ENCODE measurements at regions of chr7 and their contacts with region 1.

Region 1: GRCh38 chr7:151759591-151760042 is 117.3 kb downstream of the PRKAG2 start:
- DNase-seq: peak; percentile 49 to 81
- H3K4me3 ChIP-seq: no peak overlapping the region
- H3K27ac ChIP-seq: no peak overlapping the region
- H3K4me1 ChIP-seq: peaks cover 2 to 10% (median 7%) of the 10 kb centered on the region in 4 experiments; a peak in 6 of 7 replicates
- H3K27me3 ChIP-seq: peaks cover 0 to 10% (median 5%) of the 10 kb centered on the region in 4 experiments; a peak in 4 of 7 replicates
- CTCF ChIP-seq: peak; percentile 82 to 92 (median 92)
- EP300 ChIP-seq: no peak
- POLR2A ChIP-seq: no peak
- RAD21 ChIP-seq: peak; percentile 95 to 96

Region 2: GRCh38 chr7:151626422-151627115 is 133.0 kb before region 1 on chr7:
- CTCF ChIA-PET with region 1: interaction called, 107 read pairs
- POLR2A ChIA-PET with region 1: no interaction called
- DNase-seq: peak in 1 of 2 experiments; percentile 48
- H3K4me3 ChIP-seq: no peak overlapping the region
- H3K27ac ChIP-seq: no peak overlapping the region
- H3K4me1 ChIP-seq: peaks cover 2 to 17% (median 11%) of the 10 kb centered on the region in 4 experiments
- H3K27me3 ChIP-seq: peaks cover 0 to 21% (median 13%) of the 10 kb centered on the region in 4 experiments; a peak in 3 of 7 replicates
- CTCF ChIP-seq: peak; percentile 76 to 89 (median 79)
- EP300 ChIP-seq: no peak
- POLR2A ChIP-seq: no peak
- RAD21 ChIP-seq: peak; percentile 80 to 87

Region 3: DNA sequence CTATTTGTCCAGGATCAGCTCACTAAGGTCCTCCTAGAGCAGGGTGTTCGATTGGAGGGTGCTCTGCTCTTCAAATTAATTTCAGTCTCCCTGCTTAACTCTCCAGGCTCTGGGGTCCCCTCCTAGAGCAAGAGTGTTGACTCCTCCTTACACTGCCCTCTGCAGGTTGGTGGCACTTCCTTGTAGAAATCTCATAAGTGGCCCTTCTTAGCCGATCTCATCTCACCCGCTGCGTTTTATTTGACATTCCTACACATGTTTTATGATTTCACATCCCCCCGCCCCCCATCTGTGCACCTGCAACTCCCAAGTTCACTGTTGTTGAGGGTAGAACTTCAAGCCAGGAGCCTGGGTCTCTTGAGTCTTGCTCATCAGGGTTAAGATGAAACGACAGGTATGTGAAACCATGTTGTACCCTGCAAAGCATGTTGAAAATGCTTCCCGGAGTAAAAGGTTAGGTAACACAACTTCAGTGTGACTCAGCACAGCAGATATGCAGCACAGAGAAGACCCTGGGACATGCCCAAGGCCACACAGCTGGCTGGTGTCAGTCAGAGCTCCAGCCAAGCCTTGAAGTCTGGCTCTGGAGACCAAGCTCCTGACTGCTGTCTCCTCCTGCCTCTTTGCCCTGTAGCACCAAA is 53.9 kb before region 1 on chr7:
- CTCF ChIA-PET with region 1: interaction called, 14 read pairs
- POLR2A ChIA-PET with region 1: no interaction called
- DNase-seq: peak in 1 of 2 experiments; percentile 63
- H3K4me3 ChIP-seq: no peak overlapping the region
- H3K27ac ChIP-seq: no peak overlapping the region
- H3K4me1 ChIP-seq: peaks cover 0 to 3% (median under 1%) of the 10 kb centered on the region in 4 experiments; a peak in 3 of 7 replicates
- H3K27me3 ChIP-seq: no peaks in the 10 kb centered on the region; a peak in 3 of 7 replicates
- CTCF ChIP-seq: peak; percentile 51 to 74 (median 67)
- EP300 ChIP-seq: no peak
- POLR2A ChIP-seq: no peak
- RAD21 ChIP-seq: peak; percentile 67 to 73

Region 4: DNA sequence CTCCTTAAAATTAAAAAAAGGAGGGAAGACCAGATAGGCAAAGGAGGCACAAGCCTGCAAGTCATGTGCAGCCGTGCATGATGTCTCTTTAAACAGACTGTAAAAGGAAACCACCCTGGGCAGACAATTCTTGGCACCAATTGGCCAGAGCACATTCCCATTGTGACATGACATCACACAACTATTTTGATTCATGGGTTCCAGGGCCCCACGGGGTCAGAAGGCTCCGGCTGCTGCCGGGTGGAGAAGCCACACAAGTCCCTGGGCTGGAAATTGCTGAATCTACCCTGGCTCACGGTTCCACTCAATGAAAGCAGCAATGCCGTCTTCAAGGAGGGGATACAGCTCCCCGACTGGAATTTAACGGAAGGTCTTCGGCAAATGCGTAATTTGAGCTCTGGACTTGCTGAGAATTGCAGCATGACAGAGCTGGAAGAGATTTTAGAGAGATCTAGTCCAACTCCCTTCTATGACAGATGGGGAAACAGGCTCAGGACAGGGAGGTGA is 23.2 kb before region 1 on chr7:
- CTCF ChIA-PET with region 1: interaction called, 29 read pairs
- POLR2A ChIA-PET with region 1: interaction called, 4 read pairs
- DNase-seq: peak; percentile 44 to 58
- H3K4me3 ChIP-seq: no peak overlapping the region
- H3K27ac ChIP-seq: no peak overlapping the region
- H3K4me1 ChIP-seq: peaks cover 10 to 25% (median 11%) of the 10 kb centered on the region in 4 experiments
- H3K27me3 ChIP-seq: no peaks in the 10 kb centered on the region; a peak in 1 of 7 replicates
- CTCF ChIP-seq: peak; percentile 30 to 62 (median 55)
- EP300 ChIP-seq: no peak
- POLR2A ChIP-seq: no peak
- RAD21 ChIP-seq: peak; percentile 40 to 59; a peak in 3 of 4 replicates

Region 5: GRCh38 chr7:151782598-151783448 is 23.2 kb after region 1 on chr7:
- CTCF ChIA-PET with region 1: interaction called, 46 read pairs
- POLR2A ChIA-PET with region 1: no interaction called
- DNase-seq: peak; percentile 58 to 92
- H3K4me3 ChIP-seq: peak overlapping the region in 2 of 4 experiments; percentile 7 to 48; a peak in 2 of 8 replicates
- H3K27ac ChIP-seq: no peak overlapping the region
- H3K4me1 ChIP-seq: peaks cover 0 to 4% (median 1%) of the 10 kb centered on the region in 4 experiments; a peak in 2 of 7 replicates
- H3K27me3 ChIP-seq: peaks cover 0 to 6% (median 3%) of the 10 kb centered on the region in 4 experiments; a peak in 4 of 7 replicates
- CTCF ChIP-seq: peak; percentile 84 to 99 (median 95)
- EP300 ChIP-seq: peak in 1 of 2 experiments; percentile 15; a peak in 1 of 3 replicates
- POLR2A ChIP-seq: no peak
- RAD21 ChIP-seq: peak; percentile 62 to 77

Region 6: DNA sequence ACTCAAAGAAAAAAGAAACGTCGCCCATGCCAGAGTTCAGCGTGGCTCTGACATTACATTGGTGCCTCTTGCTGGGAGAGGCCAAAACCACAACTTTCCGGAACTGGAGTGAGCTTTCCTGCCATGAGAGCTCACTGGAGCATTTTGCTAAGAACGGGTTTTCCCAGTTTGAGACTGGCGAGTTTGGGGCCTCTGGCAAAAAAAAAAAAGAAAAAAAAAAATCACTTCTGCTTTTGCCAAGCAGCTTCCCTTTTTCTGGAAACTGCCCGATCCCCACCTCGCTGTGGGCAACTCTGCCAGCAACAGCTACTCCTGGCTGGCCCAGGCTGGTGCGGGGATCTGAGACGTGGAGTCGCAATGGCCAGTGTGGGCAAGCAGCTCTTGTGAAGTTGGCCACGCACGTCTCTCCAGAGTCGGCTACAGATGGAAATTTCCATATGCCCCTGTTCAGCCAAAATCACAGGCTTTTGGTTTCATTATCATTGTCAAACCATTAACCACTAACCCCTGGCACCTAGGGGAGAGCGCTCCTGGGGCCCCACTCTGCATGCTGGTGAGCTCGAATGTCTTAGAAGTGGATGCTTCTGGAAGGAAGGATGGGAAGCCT is 91.6 kb after region 1 on chr7:
- CTCF ChIA-PET with region 1: no interaction called
- POLR2A ChIA-PET with region 1: no interaction called
- DNase-seq: no peak
- H3K4me3 ChIP-seq: no peak overlapping the region
- H3K27ac ChIP-seq: no peak overlapping the region
- H3K4me1 ChIP-seq: peaks cover 0 to 3% (median 0%) of the 10 kb centered on the region in 4 experiments; a peak in 1 of 7 replicates
- H3K27me3 ChIP-seq: no peaks in the 10 kb centered on the region
- CTCF ChIP-seq: no peak
- EP300 ChIP-seq: no peak
- POLR2A ChIP-seq: no peak
- RAD21 ChIP-seq: no peak

Region 7: DNA sequence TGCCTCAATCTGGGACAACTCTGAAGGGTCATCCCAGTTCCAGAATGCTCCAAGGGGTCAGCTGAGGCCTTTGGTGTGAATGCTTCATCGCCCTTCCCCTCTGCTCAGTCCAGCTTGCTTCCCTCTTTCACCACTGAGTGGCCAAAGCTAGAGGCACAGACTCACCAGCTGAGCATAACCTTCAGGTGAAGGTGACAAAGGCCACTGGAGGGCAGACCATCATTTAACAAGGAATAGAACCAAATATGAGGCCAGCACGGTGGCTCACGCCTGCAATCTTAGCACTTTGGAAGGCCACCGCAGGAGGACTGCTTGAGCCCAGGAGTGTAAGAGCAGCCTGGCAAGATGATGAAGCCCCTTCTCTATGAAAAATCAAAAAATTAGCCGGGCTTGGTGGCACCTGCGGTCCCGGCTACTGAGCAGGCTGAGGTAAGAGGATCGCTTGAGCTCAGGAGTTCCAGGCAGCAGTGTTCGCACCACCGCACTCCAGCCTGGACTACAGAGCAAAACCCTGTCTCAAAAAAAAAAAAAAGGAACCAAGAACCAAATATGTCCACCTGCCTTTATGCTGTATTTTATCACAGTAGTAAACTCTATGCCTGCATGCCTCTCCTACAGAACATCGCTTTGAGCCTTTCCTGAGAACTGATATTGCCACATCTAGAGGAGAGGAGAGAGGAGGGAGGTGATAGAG is 103.9 kb after region 1 on chr7:
- CTCF ChIA-PET with region 1: no interaction called
- POLR2A ChIA-PET with region 1: no interaction called
- DNase-seq: no peak
- H3K4me3 ChIP-seq: no peak overlapping the region
- H3K27ac ChIP-seq: no peak overlapping the region
- H3K4me1 ChIP-seq: peaks cover 0 to 3% (median under 1%) of the 10 kb centered on the region in 4 experiments; a peak in 3 of 7 replicates
- H3K27me3 ChIP-seq: no peaks in the 10 kb centered on the region
- CTCF ChIP-seq: peak; percentile 37 to 94 (median 65)
- EP300 ChIP-seq: no peak
- POLR2A ChIP-seq: no peak
- RAD21 ChIP-seq: peak; percentile 61 to 70

Region 8: GRCh38 chr7:151900986-151901621 is 141.5 kb after region 1 on chr7:
- CTCF ChIA-PET with region 1: no interaction called
- POLR2A ChIA-PET with region 1: no interaction called
- DNase-seq: no peak
- H3K4me3 ChIP-seq: no peak overlapping the region
- H3K27ac ChIP-seq: no peak overlapping the region
- H3K4me1 ChIP-seq: peaks cover 0 to 5% (median 3%) of the 10 kb centered on the region in 4 experiments; a peak in 4 of 7 replicates
- H3K27me3 ChIP-seq: peaks cover 0 to 3% (median 0%) of the 10 kb centered on the region in 4 experiments; a peak in 3 of 7 replicates
- CTCF ChIP-seq: no peak
- EP300 ChIP-seq: no peak
- POLR2A ChIP-seq: no peak
- RAD21 ChIP-seq: no peak

Measured in H1 (cell line).